GM12878 (cell line): ENCODE measurements at regions of chr12 and their contacts with region 1.

Region 1: GRCh38 chr12:98259693-98260092 is 255.7 kb upstream of the TMPO start:
- DNase-seq: peak; percentile 38
- ATAC-seq: peak; percentile 79
- H3K4me3 ChIP-seq: no peak overlapping the region
- H3K27ac ChIP-seq: no peak overlapping the region; the same call in 1 of the 2 replicates
- H3K4me1 ChIP-seq: no peaks in the 10 kb centered on the region
- H3K27me3 ChIP-seq: no peaks in the 10 kb centered on the region
- CTCF ChIP-seq: no peak
- EP300 ChIP-seq: no peak
- POLR2A ChIP-seq: no peak
- RAD21 ChIP-seq: no peak

Region 2: GRCh38 chr12:96749999-96750398 is 1509.7 kb before region 1 on chr12:
- CTCF ChIA-PET with region 1: no interaction called
- POLR2A ChIA-PET with region 1: no interaction called
- RAD21 ChIA-PET with region 1: no interaction called
- SMC1A ChIA-PET with region 1: no interaction called
- in situ Hi-C with region 1: no loop called
- intact Hi-C with region 1: loop called (anchors 5 kb)
- DNase-seq: no peak
- ATAC-seq: no peak
- H3K4me3 ChIP-seq: no peak overlapping the region
- H3K27ac ChIP-seq: no peak overlapping the region
- H3K4me1 ChIP-seq: no peaks in the 10 kb centered on the region
- H3K27me3 ChIP-seq: no peaks in the 10 kb centered on the region
- CTCF ChIP-seq: no peak
- EP300 ChIP-seq: no peak
- POLR2A ChIP-seq: no peak
- RAD21 ChIP-seq: no peak

Region 3: DNA sequence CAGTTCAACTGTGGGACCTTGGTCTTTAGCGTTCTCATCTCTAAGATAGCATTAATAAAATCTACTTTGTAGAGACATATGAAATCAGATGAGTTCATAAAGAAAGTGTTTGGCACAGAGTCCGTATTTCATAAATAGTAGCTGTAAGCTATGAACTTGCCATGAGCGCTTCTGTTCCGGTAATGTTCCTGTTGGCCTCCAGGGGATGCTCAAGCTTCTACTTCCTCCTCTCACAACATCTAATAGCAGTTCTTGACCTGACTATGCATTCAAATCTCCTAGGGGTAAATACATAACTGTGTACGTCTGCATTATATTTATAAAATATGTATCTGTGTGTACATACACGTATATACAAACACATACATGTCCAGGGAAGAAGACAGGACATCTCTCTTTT is 32.5 kb before region 1 on chr12:
- CTCF ChIA-PET with region 1: interaction called, 9 read pairs
- POLR2A ChIA-PET with region 1: interaction called, 8 read pairs
- RAD21 ChIA-PET with region 1: interaction called, 43 read pairs
- SMC1A ChIA-PET with region 1: interaction called, 34 read pairs
- in situ Hi-C with region 1: no loop called
- intact Hi-C with region 1: loop called (anchors 2 kb)
- DNase-seq: no peak
- ATAC-seq: no peak
- H3K4me3 ChIP-seq: no peak overlapping the region
- H3K27ac ChIP-seq: no peak overlapping the region
- H3K4me1 ChIP-seq: peaks cover 6% of the 10 kb centered on the region
- H3K27me3 ChIP-seq: no peaks in the 10 kb centered on the region
- CTCF ChIP-seq: peak in 1 of 3 experiments; percentile 26; a peak in 1 of 6 replicates
- EP300 ChIP-seq: no peak
- POLR2A ChIP-seq: no peak
- RAD21 ChIP-seq: peak; percentile 47; the same call in 1 of the 2 replicates

Region 4: GRCh38 chr12:98244136-98244535 is 15.6 kb before region 1 on chr12:
- CTCF ChIA-PET with region 1: interaction called, 4 read pairs
- POLR2A ChIA-PET with region 1: no interaction called
- RAD21 ChIA-PET with region 1: interaction called, 3 read pairs
- SMC1A ChIA-PET with region 1: interaction called, 26 read pairs
- in situ Hi-C with region 1: no loop called
- intact Hi-C with region 1: loop called (anchors 2 kb)
- DNase-seq: no peak
- ATAC-seq: no peak
- H3K4me3 ChIP-seq: no peak overlapping the region
- H3K27ac ChIP-seq: no peak overlapping the region
- H3K4me1 ChIP-seq: no peaks in the 10 kb centered on the region
- H3K27me3 ChIP-seq: no peaks in the 10 kb centered on the region; a peak in 1 of 4 replicates
- CTCF ChIP-seq: no peak
- EP300 ChIP-seq: no peak
- POLR2A ChIP-seq: no peak
- RAD21 ChIP-seq: no peak

Region 5: GRCh38 chr12:98352218-98352811 is 92.6 kb after region 1 on chr12:
- CTCF ChIA-PET with region 1: no interaction called
- POLR2A ChIA-PET with region 1: no interaction called
- RAD21 ChIA-PET with region 1: interaction called, 5 read pairs
- SMC1A ChIA-PET with region 1: interaction called, 10 read pairs
- in situ Hi-C with region 1: no loop called
- intact Hi-C with region 1: no loop called
- DNase-seq: no peak
- ATAC-seq: peak; percentile 82
- H3K4me3 ChIP-seq: no peak overlapping the region
- H3K27ac ChIP-seq: no peak overlapping the region
- H3K4me1 ChIP-seq: peaks cover 4% of the 10 kb centered on the region; the same call in 1 of the 2 replicates
- H3K27me3 ChIP-seq: no peaks in the 10 kb centered on the region
- CTCF ChIP-seq: no peak
- EP300 ChIP-seq: peak in 1 of 2 experiments; percentile 24; a peak in 1 of 4 replicates
- POLR2A ChIP-seq: no peak
- RAD21 ChIP-seq: no peak

Region 6: GRCh38 chr12:98644432-98644710 is 384.7 kb after region 1 on chr12:
- CTCF ChIA-PET with region 1: no interaction called
- POLR2A ChIA-PET with region 1: no interaction called
- RAD21 ChIA-PET with region 1: no interaction called
- SMC1A ChIA-PET with region 1: no interaction called
- in situ Hi-C with region 1: no loop called
- intact Hi-C with region 1: no loop called
- DNase-seq: no peak
- ATAC-seq: peak; percentile 49
- H3K4me3 ChIP-seq: peak overlapping the region; percentile 98
- H3K27ac ChIP-seq: peak overlapping the region; percentile 94
- H3K4me1 ChIP-seq: no peaks in the 10 kb centered on the region
- H3K27me3 ChIP-seq: no peaks in the 10 kb centered on the region
- CTCF ChIP-seq: peak in 1 of 3 experiments; percentile 19; a peak in 1 of 6 replicates
- EP300 ChIP-seq: no peak
- POLR2A ChIP-seq: no peak
- RAD21 ChIP-seq: no peak